WTC11 (cell line): ENCODE measurements at regions of chr19 and their contacts with region 1.

Region 1: DNA sequence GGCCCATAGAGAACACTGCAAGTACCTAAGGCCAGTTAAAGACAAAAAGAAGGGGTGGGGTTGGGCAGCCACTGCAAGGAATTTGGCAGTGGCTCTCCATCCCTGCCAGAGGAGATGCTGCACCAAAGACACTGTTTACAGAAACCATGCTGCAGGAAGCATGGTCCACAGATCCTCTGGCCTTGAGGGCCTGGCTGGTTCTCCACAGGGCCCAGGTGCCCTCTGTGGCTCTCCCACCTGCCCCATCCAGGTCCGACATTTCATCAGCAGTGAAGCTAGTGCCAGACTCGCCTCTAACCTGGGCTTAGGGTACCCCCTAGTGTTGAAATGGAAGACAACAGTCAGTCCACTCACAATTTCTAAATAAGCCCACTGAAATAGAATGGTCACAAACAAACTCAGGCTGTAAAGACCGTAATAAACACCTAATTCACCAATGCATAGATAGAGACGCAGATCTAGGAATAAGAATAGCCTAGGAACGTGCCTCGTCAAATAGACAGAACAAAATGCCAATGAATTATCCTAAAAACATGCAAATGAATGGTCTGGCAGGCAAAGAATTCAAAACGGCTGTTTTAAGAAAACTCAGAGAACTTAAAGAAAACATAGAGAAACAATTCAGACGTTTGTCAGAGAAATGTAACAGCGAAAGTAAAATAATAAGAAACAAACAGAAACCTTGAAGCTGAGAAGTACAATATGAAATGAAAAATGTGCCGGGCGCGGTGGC is 23.3 kb downstream of the LYPD4 start:
- DNase-seq: peak; percentile 66
- ATAC-seq: peak; percentile 99
- H3K4me3 Mint-ChIP-seq: no peak overlapping the region
- H3K27ac Mint-ChIP-seq: no peak overlapping the region
- H3K4me1 Mint-ChIP-seq: no peaks in the 10 kb centered on the region
- H3K27me3 Mint-ChIP-seq: peaks cover 4% of the 10 kb centered on the region; the same call in 1 of the 2 replicates
- CTCF ChIP-seq: peak; percentile 37; the same call in 1 of the 2 replicates

Region 2: GRCh38 chr19:41811036-41811435 is 10.1 kb before region 1 on chr19:
- CTCF ChIA-PET with region 1: interaction called, 14 read pairs
- POLR2A ChIA-PET with region 1: no interaction called
- DNase-seq: no peak
- ATAC-seq: no peak
- H3K4me3 Mint-ChIP-seq: no peak overlapping the region
- H3K27ac Mint-ChIP-seq: no peak overlapping the region
- H3K4me1 Mint-ChIP-seq: no peaks in the 10 kb centered on the region
- H3K27me3 Mint-ChIP-seq: no peaks in the 10 kb centered on the region; the same call in 1 of the 2 replicates
- CTCF ChIP-seq: no peak